ENCODE measurements at regions of chr11 and their contacts with region 1.

Region 1: DNA sequence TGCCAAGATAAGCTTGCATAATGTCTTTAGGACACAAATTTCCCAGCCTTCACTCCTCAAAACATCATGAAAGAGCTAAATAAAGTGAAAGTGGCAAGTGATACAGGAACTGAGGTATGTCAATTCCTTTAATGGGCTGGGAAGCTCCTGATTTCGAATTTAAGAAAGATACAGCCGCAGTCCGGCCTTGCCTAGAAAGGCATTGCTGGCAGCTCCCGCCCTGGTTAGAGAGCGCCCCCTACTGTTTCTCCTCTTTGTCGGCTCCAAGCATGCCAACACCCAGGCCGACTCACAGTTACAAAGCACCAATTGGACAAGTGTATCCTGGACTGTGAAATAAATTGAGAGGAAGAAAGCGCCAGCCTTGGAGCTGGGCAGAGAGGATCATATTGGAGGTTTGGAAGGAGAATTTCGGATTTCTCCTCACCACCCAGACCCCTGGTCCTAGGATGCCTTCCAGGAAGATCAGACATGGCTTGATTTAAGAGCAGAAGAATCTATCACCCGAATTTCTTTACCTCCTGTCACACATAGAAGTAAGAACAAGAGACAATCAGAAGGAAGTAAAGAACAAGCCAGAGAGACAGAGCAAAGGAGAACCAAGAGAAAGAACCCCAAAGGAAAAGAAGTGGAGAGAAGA is 84.0 kb downstream of the FAM76B start:
- DNase-seq: peak; percentile 64 to 90 (median 87)
- ATAC-seq: peak; percentile 90
- H3K4me3 ChIP-seq: no peak overlapping the region
- H3K4me3 Mint-ChIP-seq: no peak overlapping the region
- H3K27ac ChIP-seq: no peak overlapping the region
- H3K27ac Mint-ChIP-seq: no peak overlapping the region
- H3K4me1 ChIP-seq: peaks cover 44% of the 10 kb centered on the region
- H3K4me1 Mint-ChIP-seq: peaks cover 8% of the 10 kb centered on the region
- H3K27me3 ChIP-seq: no peaks in the 10 kb centered on the region
- H3K27me3 Mint-ChIP-seq: no peaks in the 10 kb centered on the region
- CTCF ChIP-seq: peak; percentile 83

Region 2: DNA sequence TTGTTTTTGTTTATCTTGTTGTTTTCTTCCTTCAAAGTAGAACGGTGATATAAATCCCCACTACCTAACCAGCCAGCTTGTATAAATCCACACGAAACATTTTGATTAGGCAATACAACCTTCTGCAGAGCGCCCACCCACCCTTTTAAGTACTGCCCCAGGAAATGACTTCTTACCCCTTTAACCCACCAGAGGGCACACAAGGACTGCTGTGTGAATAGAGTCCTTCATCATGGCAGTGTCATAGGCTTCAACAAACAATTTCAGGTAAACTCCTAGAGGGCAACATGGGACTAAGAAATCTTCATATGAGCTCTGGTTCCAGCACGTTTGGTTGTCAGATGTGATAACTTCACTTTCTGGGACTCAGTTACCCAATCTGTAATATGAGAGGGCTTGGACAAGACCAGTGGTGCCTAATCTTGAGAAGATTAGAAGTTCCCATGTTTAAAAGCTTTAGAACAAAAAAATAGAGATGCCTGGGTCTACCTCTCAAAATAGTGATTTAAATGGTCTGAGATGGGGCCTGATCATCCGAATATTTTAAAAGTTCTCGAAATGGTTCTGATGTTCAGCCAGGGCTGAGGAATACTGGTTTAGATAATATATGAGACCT is 1082.4 kb before region 1 on chr11:
- CTCF ChIA-PET with region 1: no interaction called
- POLR2A ChIA-PET with region 1: no interaction called
- intact Hi-C with region 1: loop called in 1 of 2 experiments (anchors 10 kb)
- DNase-seq: peak in 6 of 9 experiments; percentile 19 to 67 (median 30)
- ATAC-seq: peak; percentile 68
- H3K4me3 ChIP-seq: no peak overlapping the region
- H3K4me3 Mint-ChIP-seq: no peak overlapping the region
- H3K27ac ChIP-seq: no peak overlapping the region
- H3K27ac Mint-ChIP-seq: no peak overlapping the region
- H3K4me1 ChIP-seq: no peaks in the 10 kb centered on the region
- H3K4me1 Mint-ChIP-seq: peaks cover 3% of the 10 kb centered on the region
- H3K27me3 ChIP-seq: no peaks in the 10 kb centered on the region
- H3K27me3 Mint-ChIP-seq: peaks cover 11% of the 10 kb centered on the region
- CTCF ChIP-seq: peak; percentile 41

Region 3: DNA sequence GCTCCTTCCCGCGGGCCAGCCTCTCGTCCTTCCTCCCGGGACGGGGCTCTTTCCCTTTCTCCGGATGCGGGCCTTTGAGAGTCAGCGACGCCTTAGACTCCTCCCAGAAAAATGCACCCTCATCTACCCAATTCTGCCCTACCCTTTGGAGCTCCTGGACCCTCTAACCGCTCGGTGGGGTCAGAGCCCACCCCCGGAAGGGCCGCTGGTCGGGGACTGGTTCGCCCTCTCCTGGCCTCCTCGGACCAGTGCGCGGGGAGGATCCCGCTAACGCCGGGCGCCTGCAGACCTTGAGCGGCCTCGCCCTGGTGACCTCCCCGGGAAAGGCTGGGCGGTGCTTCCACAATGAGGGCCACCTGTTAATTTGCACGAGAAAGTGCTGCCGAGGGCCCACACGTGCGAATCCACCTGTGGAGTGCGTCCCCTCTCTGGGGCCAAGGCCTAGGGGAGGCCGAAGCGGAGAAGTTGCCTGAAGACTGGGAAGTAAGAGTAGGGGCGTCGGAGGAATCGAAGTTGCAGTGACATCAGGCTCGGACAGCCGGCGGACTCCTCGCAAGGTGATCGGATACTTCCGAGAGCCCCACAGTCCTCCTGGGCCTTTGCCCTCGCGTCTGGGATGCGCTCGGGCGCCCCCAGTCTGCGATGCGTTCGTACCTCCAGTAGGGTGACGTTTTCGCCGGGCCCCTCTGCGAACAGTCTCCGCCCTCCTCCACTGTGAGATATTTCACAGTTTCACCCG is 554.5 kb before region 1 on chr11:
- CTCF ChIA-PET with region 1: interaction called, 400 read pairs
- POLR2A ChIA-PET with region 1: interaction called, 28 read pairs
- intact Hi-C with region 1: loop called (anchors 1 kb)
- DNase-seq: peak; percentile 83 to 96 (median 91)
- ATAC-seq: peak; percentile 94
- H3K4me3 ChIP-seq: peak overlapping the region; percentile 64 to 82
- H3K4me3 Mint-ChIP-seq: peak overlapping the region; percentile 85
- H3K27ac ChIP-seq: peak overlapping the region; percentile 66 to 69
- H3K27ac Mint-ChIP-seq: peak overlapping the region; percentile 91
- H3K4me1 ChIP-seq: peaks cover 24% of the 10 kb centered on the region
- H3K4me1 Mint-ChIP-seq: peaks cover 35% of the 10 kb centered on the region
- H3K27me3 ChIP-seq: no peaks in the 10 kb centered on the region
- H3K27me3 Mint-ChIP-seq: peaks cover 4% of the 10 kb centered on the region
- CTCF ChIP-seq: peak; percentile 92

Region 4: DNA sequence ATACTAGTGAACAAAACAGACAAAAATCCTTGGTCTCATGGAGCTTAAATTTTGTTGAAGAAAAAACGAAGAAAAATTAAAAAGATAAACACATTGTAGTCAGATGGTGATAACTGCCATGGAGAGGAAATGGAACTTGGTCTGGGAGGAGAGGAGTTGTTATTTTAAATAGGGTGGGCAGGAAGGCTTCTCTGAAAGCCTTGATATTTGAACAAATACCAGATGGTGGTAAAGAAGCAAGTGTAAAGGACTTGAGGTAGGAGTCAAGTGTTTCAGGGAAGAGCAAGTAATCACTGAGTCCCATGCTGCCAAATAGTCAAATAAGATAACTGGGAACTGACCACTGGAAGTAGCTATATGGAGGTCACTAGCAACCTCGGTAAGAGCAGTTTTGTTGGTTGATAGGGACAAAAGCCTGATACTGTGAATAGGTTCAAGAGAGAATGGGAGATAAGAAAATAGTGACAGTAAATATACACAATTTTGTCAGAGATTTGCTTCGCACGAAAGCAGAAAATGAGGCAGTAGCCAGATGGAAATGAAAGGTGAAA is 529.7 kb before region 1 on chr11:
- CTCF ChIA-PET with region 1: interaction called, 12 read pairs
- POLR2A ChIA-PET with region 1: no interaction called
- intact Hi-C with region 1: no loop called
- DNase-seq: no peak
- ATAC-seq: no peak
- H3K4me3 ChIP-seq: no peak overlapping the region
- H3K4me3 Mint-ChIP-seq: no peak overlapping the region
- H3K27ac ChIP-seq: no peak overlapping the region
- H3K27ac Mint-ChIP-seq: no peak overlapping the region
- H3K4me1 ChIP-seq: no peaks in the 10 kb centered on the region
- H3K4me1 Mint-ChIP-seq: no peaks in the 10 kb centered on the region
- H3K27me3 ChIP-seq: no peaks in the 10 kb centered on the region
- H3K27me3 Mint-ChIP-seq: no peaks in the 10 kb centered on the region
- CTCF ChIP-seq: no peak

Region 5: GRCh38 chr11:95254131-95254704 is 451.4 kb before region 1 on chr11:
- CTCF ChIA-PET with region 1: interaction called, 15 read pairs
- POLR2A ChIA-PET with region 1: interaction called, 3 read pairs
- intact Hi-C with region 1: loop called in 1 of 2 experiments (anchors 1 kb)
- DNase-seq: peak; percentile 58 to 92 (median 78)
- ATAC-seq: peak; percentile 100
- H3K4me3 ChIP-seq: peak overlapping the region; percentile 40 to 48
- H3K4me3 Mint-ChIP-seq: peak overlapping the region; percentile 83
- H3K27ac ChIP-seq: peak overlapping the region; percentile 28 to 53
- H3K27ac Mint-ChIP-seq: peak overlapping the region; percentile 88
- H3K4me1 ChIP-seq: peaks cover 32% of the 10 kb centered on the region
- H3K4me1 Mint-ChIP-seq: peaks cover 37% of the 10 kb centered on the region
- H3K27me3 ChIP-seq: no peaks in the 10 kb centered on the region
- H3K27me3 Mint-ChIP-seq: no peaks in the 10 kb centered on the region
- CTCF ChIP-seq: no peak

Region 6: DNA sequence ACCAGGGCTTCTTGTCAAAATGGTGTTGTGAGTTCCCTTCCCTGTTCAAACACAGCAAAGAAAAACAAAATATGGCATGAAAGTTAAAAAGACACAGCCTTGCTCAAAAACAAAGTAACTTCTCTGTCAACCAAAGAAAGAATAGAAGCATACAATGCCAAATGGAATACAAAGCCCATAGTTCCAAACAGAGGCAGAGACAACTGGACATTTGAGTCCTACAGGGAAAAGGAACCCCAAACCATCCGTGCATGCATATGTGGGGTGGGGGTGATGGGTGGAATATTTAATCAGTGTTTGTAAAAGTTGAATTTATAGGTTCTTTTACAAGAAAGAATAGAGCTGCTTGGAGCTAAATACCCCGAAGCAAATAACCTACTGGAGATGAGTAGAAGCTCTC is 134.8 kb before region 1 on chr11:
- CTCF ChIA-PET with region 1: no interaction called
- POLR2A ChIA-PET with region 1: no interaction called
- intact Hi-C with region 1: no loop called
- DNase-seq: no peak
- ATAC-seq: no peak
- H3K4me3 ChIP-seq: no peak overlapping the region
- H3K4me3 Mint-ChIP-seq: no peak overlapping the region
- H3K27ac ChIP-seq: no peak overlapping the region
- H3K27ac Mint-ChIP-seq: no peak overlapping the region
- H3K4me1 ChIP-seq: no peaks in the 10 kb centered on the region
- H3K4me1 Mint-ChIP-seq: no peaks in the 10 kb centered on the region
- H3K27me3 ChIP-seq: no peaks in the 10 kb centered on the region
- H3K27me3 Mint-ChIP-seq: no peaks in the 10 kb centered on the region
- CTCF ChIP-seq: no peak

Region 7: DNA sequence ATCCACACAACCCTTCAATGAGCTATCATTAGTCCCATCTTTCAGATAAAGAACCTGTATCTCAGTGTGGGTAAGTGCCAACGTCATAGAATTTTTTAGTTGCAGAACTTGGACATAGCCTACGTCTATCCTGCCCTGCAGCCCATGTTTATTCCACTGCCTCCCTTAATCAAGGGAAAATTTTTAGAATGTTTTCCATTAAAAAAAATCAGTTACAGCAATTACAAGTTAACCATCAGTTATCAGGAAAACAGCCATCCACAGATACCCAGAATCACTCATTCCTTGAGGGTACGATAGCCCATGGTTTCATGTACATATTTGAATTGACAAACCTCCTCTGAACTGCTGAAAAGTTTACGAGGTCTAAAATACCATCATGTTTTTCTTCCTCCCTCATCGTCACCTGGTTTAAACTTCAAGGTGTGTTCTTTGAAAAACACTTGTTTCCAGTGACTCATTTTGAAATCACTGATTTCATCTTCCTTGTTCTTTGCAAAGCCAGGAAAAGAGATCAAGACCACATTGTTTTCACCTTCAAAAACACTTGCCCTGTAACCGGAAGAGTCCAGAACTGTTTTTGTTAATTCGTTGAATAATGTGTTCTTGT is 16.9 kb before region 1 on chr11:
- CTCF ChIA-PET with region 1: interaction called, 34 read pairs
- POLR2A ChIA-PET with region 1: interaction called, 5 read pairs
- intact Hi-C with region 1: no loop called
- DNase-seq: peak in 2 of 9 experiments; percentile 36 to 62
- ATAC-seq: peak; percentile 72
- H3K4me3 ChIP-seq: no peak overlapping the region
- H3K4me3 Mint-ChIP-seq: no peak overlapping the region
- H3K27ac ChIP-seq: peak overlapping the region; percentile 14 to 45
- H3K27ac Mint-ChIP-seq: no peak overlapping the region
- H3K4me1 ChIP-seq: peaks cover 54% of the 10 kb centered on the region
- H3K4me1 Mint-ChIP-seq: peaks cover 25% of the 10 kb centered on the region
- H3K27me3 ChIP-seq: no peaks in the 10 kb centered on the region
- H3K27me3 Mint-ChIP-seq: no peaks in the 10 kb centered on the region
- CTCF ChIP-seq: no peak

Region 8: DNA sequence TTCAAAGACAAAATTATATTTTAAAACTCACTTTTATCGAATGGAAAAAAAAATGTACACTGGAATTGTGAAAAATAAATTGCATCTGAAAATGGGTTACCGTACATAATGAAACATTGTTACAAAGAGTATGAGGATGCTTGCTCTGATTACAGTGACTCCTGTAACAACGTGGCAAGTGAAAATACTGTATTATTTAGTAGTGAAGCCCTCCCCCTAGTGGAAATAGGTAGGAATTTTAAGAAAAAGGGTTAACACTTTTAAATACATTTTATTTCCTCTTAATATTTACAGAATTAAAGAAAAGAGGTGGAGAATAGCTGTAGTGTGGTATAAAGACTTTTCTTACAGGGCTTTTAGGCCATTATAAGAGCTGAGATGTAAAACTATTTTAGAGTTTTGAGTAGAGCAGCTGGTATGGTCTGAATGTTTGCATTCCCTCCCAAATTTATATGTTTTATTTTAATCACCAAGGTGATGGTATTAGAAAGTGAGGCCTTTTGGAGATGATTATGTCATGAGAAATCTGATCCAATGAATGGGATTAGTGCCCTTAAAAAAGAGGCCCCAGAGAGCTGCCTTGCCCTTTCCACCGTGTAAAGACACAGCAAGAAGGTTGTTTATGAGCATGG is 58.8 kb after region 1 on chr11:
- CTCF ChIA-PET with region 1: interaction called, 27 read pairs
- POLR2A ChIA-PET with region 1: no interaction called
- intact Hi-C with region 1: loop called (anchors 1 to 2 kb)
- DNase-seq: peak in 2 of 9 experiments; percentile 61 to 73
- ATAC-seq: peak; percentile 86
- H3K4me3 ChIP-seq: no peak overlapping the region
- H3K4me3 Mint-ChIP-seq: no peak overlapping the region
- H3K27ac ChIP-seq: no peak overlapping the region
- H3K27ac Mint-ChIP-seq: no peak overlapping the region
- H3K4me1 ChIP-seq: no peaks in the 10 kb centered on the region
- H3K4me1 Mint-ChIP-seq: no peaks in the 10 kb centered on the region
- H3K27me3 ChIP-seq: peaks cover 0 to 2% of the 10 kb centered on the region in 2 experiments
- H3K27me3 Mint-ChIP-seq: peaks cover 5% of the 10 kb centered on the region
- CTCF ChIP-seq: peak; percentile 88

Measured in CD8-positive, alpha-beta T cell (primary cell).